ENCODE measurements at regions of chr7 and their contacts with region 1.

Region 1: GRCh38 chr7:992709-993607 is 10.0 kb downstream of the CYP2W1 start:
- DNase-seq: peak; percentile 97
- H3K4me3 Mint-ChIP-seq: no peak overlapping the region
- H3K27ac Mint-ChIP-seq: no peak overlapping the region
- H3K4me1 Mint-ChIP-seq: peaks cover 3% of the 10 kb centered on the region
- H3K27me3 Mint-ChIP-seq: no peaks in the 10 kb centered on the region

Region 2: GRCh38 chr7:909358-910329 is 83.3 kb before region 1 on chr7:
- CTCF ChIA-PET with region 1: interaction called, 16 read pairs
- intact Hi-C with region 1: no loop called
- DNase-seq: peak; percentile 40
- H3K4me3 Mint-ChIP-seq: peak overlapping the region; percentile 32
- H3K27ac Mint-ChIP-seq: no peak overlapping the region
- H3K4me1 Mint-ChIP-seq: peaks cover 12% of the 10 kb centered on the region
- H3K27me3 Mint-ChIP-seq: no peaks in the 10 kb centered on the region

Region 3: DNA sequence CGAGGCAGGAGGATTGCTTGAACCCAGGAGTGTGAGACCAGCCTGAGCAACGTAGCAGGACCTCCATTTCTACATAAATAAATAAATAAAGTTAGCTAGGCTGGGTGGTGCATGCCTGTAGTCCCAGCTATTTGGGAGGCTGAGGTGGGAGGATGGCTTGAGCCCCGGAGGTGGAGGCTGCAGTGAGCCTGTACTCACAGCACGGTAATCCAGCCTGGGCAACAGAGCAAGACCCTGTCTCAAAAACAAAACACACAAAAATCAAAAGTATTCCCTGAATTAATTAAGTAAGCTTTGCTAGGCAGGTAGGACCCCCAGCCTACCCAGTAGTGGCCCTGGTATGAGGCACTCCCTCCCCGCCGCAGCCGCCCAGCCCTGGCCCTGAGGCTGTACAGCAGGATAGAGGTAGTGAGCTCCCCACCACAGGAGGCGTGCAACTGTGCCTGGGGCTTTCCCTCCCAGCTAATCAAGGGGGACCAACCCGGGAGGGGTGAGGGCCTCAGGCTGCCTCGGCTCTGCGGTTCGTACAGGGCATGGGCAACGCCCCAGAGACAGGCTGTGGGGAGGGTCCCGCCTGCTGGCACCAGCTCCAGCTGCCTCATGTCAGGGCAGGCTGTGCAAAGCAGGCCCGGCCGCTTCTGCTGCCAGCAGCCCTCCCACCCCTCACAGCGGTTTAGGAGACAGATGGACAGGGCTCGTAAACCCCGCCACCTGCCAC is 11.0 kb before region 1 on chr7:
- CTCF ChIA-PET with region 1: interaction called, 38 read pairs
- intact Hi-C with region 1: no loop called
- DNase-seq: no peak
- H3K4me3 Mint-ChIP-seq: no peak overlapping the region
- H3K27ac Mint-ChIP-seq: no peak overlapping the region
- H3K4me1 Mint-ChIP-seq: no peaks in the 10 kb centered on the region
- H3K27me3 Mint-ChIP-seq: peaks cover 9% of the 10 kb centered on the region

Region 4: DNA sequence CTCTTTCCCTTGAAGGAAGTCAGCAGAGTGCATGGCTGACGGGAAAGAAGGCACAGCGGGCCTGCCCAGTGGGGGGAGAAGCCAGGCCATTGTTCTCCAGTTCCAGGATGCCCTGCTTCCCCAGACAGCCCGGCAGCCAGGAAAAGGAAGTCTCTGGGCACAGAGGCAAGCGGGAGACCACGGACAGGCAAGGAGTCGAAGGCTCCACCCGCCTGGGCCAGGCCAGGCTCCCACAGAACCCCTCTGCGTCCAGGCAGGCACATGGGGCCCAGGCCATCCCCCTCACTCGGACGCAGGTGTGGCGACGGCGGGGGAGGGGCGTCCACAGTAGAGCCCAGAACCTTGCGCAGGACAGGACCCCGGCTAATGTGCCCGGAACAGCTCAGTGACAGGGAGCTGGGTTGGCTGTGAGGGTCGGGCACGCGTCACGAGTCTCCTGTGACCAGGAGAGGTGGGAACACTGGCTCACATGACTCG is 60.1 kb after region 1 on chr7:
- CTCF ChIA-PET with region 1: interaction called, 44 read pairs
- intact Hi-C with region 1: no loop called
- DNase-seq: no peak
- H3K4me3 Mint-ChIP-seq: no peak overlapping the region
- H3K27ac Mint-ChIP-seq: no peak overlapping the region
- H3K4me1 Mint-ChIP-seq: peaks cover 53% of the 10 kb centered on the region
- H3K27me3 Mint-ChIP-seq: no peaks in the 10 kb centered on the region

Region 5: DNA sequence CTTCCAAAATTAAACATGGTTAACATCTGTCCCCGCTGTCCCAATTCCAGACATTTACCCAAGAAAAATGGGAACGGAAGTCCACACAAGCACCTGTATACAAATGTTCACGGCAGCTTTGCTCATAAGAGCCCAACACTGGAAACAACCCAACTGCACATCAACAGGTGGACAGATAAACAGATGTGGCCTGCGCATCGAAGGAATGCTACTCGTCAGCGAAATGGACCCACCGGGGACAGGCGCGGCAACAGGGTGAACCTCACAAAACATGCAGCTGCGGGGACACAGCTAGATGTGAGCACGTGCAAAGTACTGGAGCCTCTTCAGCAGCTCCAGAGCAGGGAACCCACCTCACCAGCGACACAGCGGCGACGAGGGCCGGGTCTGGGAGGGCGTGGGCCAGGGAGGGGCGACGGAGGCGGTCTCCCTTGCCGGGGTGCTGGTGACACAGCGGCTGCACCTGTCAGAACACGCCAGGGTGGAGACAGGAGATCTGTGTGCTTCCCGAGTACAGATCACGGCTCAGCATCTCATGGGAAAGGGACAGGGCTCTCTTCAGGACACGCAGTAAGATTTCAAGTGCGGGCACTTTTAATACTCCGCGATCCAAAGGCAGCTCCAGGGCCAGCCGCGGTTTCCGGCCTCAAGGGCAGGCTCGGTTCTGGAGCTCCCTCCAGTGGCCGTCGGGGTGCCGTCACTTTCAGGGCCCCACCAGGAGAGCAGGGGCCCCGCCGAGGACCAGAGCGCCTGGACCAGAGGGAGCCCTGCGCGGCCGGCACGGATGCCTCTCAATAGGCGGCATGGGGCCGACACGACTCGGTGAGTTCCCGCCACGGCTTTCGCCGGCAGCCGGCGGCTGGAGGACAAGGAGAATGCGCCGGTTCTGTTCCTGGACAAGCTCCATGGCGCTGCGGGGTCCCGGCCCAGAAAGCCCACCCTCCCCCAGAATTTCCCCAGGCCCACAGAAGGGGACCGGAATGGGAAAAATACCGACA is 72.6 kb after region 1 on chr7:
- CTCF ChIA-PET with region 1: interaction called, 157 read pairs
- intact Hi-C with region 1: loop called (anchors 1 kb)
- DNase-seq: peak; percentile 87
- H3K4me3 Mint-ChIP-seq: no peak overlapping the region
- H3K27ac Mint-ChIP-seq: no peak overlapping the region
- H3K4me1 Mint-ChIP-seq: peaks cover 6% of the 10 kb centered on the region
- H3K27me3 Mint-ChIP-seq: no peaks in the 10 kb centered on the region

Region 6: GRCh38 chr7:1137510-1138167 is 144.7 kb after region 1 on chr7:
- CTCF ChIA-PET with region 1: interaction called, 4 read pairs
- intact Hi-C with region 1: loop called (anchors 1 kb)
- DNase-seq: no peak
- H3K4me3 Mint-ChIP-seq: peak overlapping the region; percentile 84
- H3K27ac Mint-ChIP-seq: peak overlapping the region; percentile 42
- H3K4me1 Mint-ChIP-seq: peaks cover 20% of the 10 kb centered on the region
- H3K27me3 Mint-ChIP-seq: no peaks in the 10 kb centered on the region

Region 7: GRCh38 chr7:1175967-1176851 is 183.3 kb after region 1 on chr7:
- CTCF ChIA-PET with region 1: interaction called, 45 read pairs
- intact Hi-C with region 1: loop called (anchors 1 kb)
- DNase-seq: peak; percentile 90
- H3K4me3 Mint-ChIP-seq: peak overlapping the region; percentile 60
- H3K27ac Mint-ChIP-seq: no peak overlapping the region
- H3K4me1 Mint-ChIP-seq: peaks cover 11% of the 10 kb centered on the region
- H3K27me3 Mint-ChIP-seq: peaks cover 10% of the 10 kb centered on the region